ENCODE measurements at regions of chr5 and their contacts with region 1.

Region 1: DNA sequence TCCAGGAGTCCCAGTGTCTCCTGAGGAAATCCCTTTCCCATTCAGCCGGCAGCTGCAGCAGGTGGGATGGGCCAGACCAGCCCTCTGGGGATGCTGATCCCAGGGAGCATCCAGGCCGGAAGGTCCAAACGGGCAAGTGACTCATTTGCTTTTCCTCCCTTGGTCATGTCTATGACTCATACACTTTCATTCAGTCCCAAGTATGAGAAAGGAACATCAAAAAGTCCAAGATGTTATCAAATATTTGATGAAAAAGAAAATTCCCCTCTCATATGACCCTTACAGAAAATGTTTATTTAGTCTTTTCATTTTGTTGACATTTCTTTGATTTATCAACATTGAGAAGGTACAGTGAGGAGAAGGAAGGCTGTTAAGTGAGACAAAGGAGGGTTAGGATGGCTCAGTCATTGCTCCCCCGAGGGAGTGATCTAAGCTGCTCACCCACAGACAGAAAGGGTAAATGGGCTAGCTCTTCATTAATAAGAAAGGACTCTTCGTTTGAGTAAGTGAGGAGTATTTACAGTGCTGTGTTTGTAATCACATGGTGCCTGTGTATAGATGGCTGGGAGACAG is 117.6 kb upstream of the ANKRD55 start:
- DNase-seq: peak; percentile 81 to 94
- H3K4me3 ChIP-seq: no peak overlapping the region; the same call in 1 of the 2 replicates
- H3K27ac ChIP-seq: peak overlapping the region; percentile 76
- H3K4me1 ChIP-seq: peaks cover 73% of the 10 kb centered on the region
- H3K27me3 ChIP-seq: no peaks in the 10 kb centered on the region
- CTCF ChIP-seq: no peak

Region 2: DNA sequence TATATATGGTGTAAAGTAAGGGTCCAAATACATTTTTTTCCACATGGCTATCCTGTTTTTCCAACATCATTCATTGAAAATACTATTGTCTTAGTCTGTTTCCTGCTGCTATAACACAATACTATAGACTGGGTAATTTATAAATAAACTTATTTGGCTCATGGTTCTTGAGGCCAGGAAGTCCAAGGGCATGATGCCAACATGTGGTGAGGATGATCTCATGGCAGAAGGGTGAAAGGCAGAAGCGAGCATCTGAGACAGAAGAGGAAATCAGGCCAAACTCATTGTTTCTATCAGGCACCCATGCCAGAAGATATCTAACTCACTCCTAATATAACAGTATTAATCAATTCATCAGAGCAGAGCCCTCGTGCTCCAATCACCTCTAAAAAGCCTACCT is 160.2 kb before region 1 on chr5:
- CTCF ChIA-PET with region 1: no interaction called
- POLR2A ChIA-PET with region 1: no interaction called
- intact Hi-C with region 1: no loop called
- DNase-seq: no peak
- H3K4me3 ChIP-seq: no peak overlapping the region
- H3K27ac ChIP-seq: no peak overlapping the region
- H3K4me1 ChIP-seq: peaks cover 19% of the 10 kb centered on the region
- H3K27me3 ChIP-seq: no peaks in the 10 kb centered on the region
- CTCF ChIP-seq: no peak

Region 3: GRCh38 chr5:56429082-56429891 is 78.6 kb after region 1 on chr5:
- CTCF ChIA-PET with region 1: no interaction called
- POLR2A ChIA-PET with region 1: no interaction called
- intact Hi-C with region 1: loop called (anchors 5 kb)
- DNase-seq: peak; percentile 62 to 72
- H3K4me3 ChIP-seq: no peak overlapping the region
- H3K27ac ChIP-seq: no peak overlapping the region
- H3K4me1 ChIP-seq: 0 out of 2 replicates have a peak, but pooled peaks cover 6% of the 10 kb centered on the region
- H3K27me3 ChIP-seq: no peaks in the 10 kb centered on the region
- CTCF ChIP-seq: no peak

Region 4: GRCh38 chr5:56481428-56482357 is 131.0 kb after region 1 on chr5:
- CTCF ChIA-PET with region 1: no interaction called
- POLR2A ChIA-PET with region 1: no interaction called
- intact Hi-C with region 1: loop called (anchors 1 kb)
- DNase-seq: peak; percentile 34 to 47
- H3K4me3 ChIP-seq: peak overlapping the region; percentile 78
- H3K27ac ChIP-seq: peak overlapping the region; percentile 85
- H3K4me1 ChIP-seq: peaks cover 38% of the 10 kb centered on the region
- H3K27me3 ChIP-seq: no peaks in the 10 kb centered on the region
- CTCF ChIP-seq: peak; percentile 29; the same call in 1 of the 2 replicates

Region 5: DNA sequence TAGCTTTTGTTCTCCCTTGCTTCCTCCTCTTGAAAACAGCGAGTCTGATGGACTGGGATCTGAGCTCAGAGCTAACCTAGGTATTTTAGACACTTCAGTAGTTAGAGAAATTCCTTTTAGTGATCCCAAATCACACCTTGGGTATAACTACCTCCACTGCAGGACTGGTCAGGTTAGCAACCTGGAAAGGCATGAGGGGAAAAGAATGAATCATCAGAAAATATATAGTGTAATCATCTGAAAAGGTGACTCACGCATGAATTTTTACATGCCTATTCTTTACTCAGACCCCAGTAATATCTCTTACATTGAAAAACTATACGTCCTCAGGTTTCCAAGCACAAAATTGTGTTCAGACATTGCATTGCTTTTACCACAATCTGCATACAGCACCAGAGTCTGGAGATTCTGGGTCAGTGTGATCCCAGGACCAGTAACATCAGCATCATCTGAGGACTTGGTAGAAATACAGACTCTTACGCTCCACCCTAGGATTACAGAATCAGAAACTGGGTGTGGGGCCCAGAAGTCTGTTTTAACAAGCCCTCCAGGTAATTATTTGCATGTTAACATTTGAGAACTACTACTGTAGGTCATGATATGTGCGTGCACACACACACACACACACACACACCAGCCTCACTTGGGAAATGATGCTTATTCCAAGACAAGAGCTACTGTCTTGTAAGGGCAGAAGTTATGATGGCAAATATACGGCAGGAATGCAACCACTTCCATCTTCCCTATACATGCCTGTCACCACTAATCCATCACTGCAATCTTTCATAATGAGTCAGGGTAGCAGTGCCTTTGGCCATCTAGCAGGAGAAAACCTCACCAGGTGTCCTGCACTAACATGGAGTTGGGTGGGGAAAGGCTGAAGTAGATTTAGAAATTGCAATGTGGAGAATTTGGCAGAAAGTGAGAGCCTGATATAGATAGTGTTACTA is 193.0 kb after region 1 on chr5:
- CTCF ChIA-PET with region 1: no interaction called
- POLR2A ChIA-PET with region 1: no interaction called
- intact Hi-C with region 1: loop called (anchors 1 kb)
- DNase-seq: peak; percentile 62 to 97
- H3K4me3 ChIP-seq: no peak overlapping the region
- H3K27ac ChIP-seq: peak overlapping the region; percentile 96
- H3K4me1 ChIP-seq: peaks cover 39% of the 10 kb centered on the region
- H3K27me3 ChIP-seq: no peaks in the 10 kb centered on the region
- CTCF ChIP-seq: no peak

Region 6: DNA sequence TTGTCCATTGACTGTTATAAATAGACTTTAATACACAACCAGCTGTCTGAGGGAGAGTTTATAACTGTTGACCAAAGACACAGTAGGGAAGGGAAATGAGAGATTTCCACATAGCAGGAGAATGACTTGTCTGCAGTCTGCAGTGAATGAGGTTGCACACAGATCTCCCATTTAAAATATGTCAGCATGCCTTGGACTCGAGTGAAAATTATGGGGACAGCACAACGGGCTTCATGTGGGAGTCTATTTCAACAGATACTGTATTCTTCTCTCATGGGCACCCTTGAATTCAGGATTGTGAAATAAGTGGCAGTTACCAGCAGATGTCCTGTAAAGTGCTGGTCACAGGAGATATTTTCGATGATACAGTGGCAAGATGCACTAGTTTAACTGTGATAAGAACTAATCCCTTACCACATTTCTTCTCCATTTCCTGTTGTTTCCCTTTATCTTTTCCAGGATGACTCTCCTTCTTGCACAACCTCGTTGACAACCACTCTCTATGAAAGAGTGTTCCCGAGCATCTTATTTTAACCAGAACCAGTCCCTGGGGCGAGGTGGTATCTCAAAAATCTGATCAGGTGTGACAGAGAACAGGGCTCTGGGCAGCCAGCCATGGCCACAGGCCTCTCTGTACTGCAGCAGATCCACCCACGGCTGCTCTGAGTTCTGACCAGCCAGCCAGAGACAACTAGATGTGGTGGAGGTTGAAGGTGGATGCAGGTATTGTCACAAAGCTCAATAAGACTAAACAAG is 413.2 kb after region 1 on chr5:
- CTCF ChIA-PET with region 1: no interaction called
- POLR2A ChIA-PET with region 1: no interaction called
- intact Hi-C with region 1: loop called (anchors 1 kb)
- DNase-seq: peak; percentile 83 to 86
- H3K4me3 ChIP-seq: peak overlapping the region; percentile 8; the same call in 1 of the 2 replicates
- H3K27ac ChIP-seq: peak overlapping the region; percentile 67
- H3K4me1 ChIP-seq: peaks cover 46% of the 10 kb centered on the region
- H3K27me3 ChIP-seq: no peaks in the 10 kb centered on the region
- CTCF ChIP-seq: no peak

Region 7: GRCh38 chr5:57450991-57451876 is 1100.5 kb after region 1 on chr5:
- CTCF ChIA-PET with region 1: no interaction called
- POLR2A ChIA-PET with region 1: no interaction called
- intact Hi-C with region 1: no loop called
- DNase-seq: peak in 1 of 2 experiments; percentile 45
- H3K4me3 ChIP-seq: no peak overlapping the region
- H3K27ac ChIP-seq: no peak overlapping the region
- H3K4me1 ChIP-seq: no peaks in the 10 kb centered on the region
- H3K27me3 ChIP-seq: no peaks in the 10 kb centered on the region
- CTCF ChIP-seq: no peak

Region 8: DNA sequence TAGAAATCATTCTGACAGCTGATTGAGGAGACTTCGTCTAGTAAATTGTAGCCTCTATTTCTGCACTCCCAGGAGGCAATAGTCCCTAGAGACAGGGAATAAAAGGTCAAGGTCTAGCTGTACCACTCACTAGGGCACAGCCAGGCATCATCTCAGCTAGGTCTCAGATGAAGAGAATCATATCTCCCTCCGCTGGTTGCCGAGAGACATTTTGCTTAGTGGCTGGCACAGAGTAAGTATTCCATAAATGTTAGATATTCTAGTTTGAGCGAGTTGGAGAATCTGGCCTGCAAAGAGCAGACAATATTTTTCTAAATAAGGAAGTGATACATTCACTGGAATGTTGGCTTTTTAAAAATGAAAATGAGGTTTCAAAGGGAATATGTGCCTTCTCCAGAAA is 1312.3 kb after region 1 on chr5:
- CTCF ChIA-PET with region 1: no interaction called
- POLR2A ChIA-PET with region 1: no interaction called
- intact Hi-C with region 1: no loop called
- DNase-seq: no peak
- H3K4me3 ChIP-seq: no peak overlapping the region
- H3K27ac ChIP-seq: no peak overlapping the region
- H3K4me1 ChIP-seq: 0 out of 2 replicates have a peak, but pooled peaks cover 4% of the 10 kb centered on the region
- H3K27me3 ChIP-seq: no peaks in the 10 kb centered on the region
- CTCF ChIP-seq: no peak